K562 (cell line): ENCODE measurements at regions of chr1 and their contacts with region 1.

Region 1: DNA sequence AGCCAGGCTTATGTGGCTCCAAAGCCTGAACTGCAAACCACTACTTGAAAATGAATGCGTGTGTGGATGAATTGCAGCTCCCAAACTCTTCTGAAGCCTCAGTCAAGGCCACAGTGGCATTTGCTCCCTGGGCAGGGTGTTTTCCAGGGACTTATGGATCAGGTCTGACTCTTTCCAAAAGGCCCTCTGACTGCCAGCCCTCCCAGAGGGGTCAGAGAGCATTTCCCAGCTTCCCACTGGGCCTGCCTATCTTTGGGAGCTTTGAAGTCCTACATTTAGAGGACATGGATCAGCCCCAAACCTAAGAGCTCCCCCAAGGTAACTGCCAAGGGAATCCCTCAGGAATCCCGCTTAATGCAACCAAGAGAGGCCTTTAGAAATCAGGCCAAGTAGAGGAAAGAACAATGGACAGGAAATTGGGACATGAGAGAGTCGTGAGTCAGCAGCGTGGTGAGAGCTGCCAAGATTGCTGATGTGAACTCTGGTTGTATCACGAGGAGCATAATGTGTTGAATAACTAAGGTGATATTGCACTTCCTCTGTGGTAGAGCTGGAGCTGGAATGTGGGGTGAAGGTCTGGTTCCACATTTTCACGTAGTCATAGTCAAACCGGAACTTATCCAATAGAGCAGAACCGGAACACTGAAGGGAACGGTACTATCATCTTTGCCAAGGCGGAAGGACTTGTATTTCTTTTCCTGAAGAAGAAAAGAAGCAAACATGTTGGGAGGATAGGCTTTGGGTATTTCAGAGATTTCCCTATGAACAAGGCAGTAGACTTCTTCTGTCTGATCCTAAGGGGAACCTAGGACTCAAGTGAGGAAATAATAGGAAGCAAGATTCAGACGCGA is 99.4 kb upstream of the JUN start:
- DNase-seq: peak; percentile 41 to 89 (median 62)
- ATAC-seq: peak; percentile 63
- H3K4me3 ChIP-seq: no peak overlapping the region
- H3K27ac ChIP-seq: peak overlapping the region; percentile 97
- H3K4me1 ChIP-seq: peaks cover 47 to 64% of the 10 kb centered on the region in 2 experiments
- H3K27me3 ChIP-seq: no peaks in the 10 kb centered on the region
- CTCF ChIP-seq: no peak
- EP300 ChIP-seq: peak; percentile 86
- POLR2A ChIP-seq: 0 out of 2 replicates have a peak, but pooled peaks have one; percentile 39
- RAD21 ChIP-seq: peak in 1 of 2 experiments; percentile 17; a peak in 1 of 4 replicates

Region 2: GRCh38 chr1:58815069-58815685 is 68.1 kb before region 1 on chr1:
- CTCF ChIA-PET with region 1: no interaction called
- POLR2A ChIA-PET with region 1: no interaction called
- in situ Hi-C with region 1: no loop called
- intact Hi-C with region 1: loop called (anchors 1 kb)
- DNase-seq: peak; percentile 83 to 91 (median 86)
- ATAC-seq: peak; percentile 89
- H3K4me3 ChIP-seq: peak overlapping the region; percentile 47
- H3K27ac ChIP-seq: peak overlapping the region; percentile 93
- H3K4me1 ChIP-seq: peaks cover 21 to 27% of the 10 kb centered on the region in 2 experiments
- H3K27me3 ChIP-seq: no peaks in the 10 kb centered on the region
- CTCF ChIP-seq: no peak
- EP300 ChIP-seq: peak; percentile 72
- POLR2A ChIP-seq: no peak
- RAD21 ChIP-seq: peak in 1 of 2 experiments; percentile 11; a peak in 1 of 4 replicates

Region 3: GRCh38 chr1:58968360-58968952 is 85.2 kb after region 1 on chr1:
- CTCF ChIA-PET with region 1: no interaction called
- POLR2A ChIA-PET with region 1: interaction called, 3 read pairs
- in situ Hi-C with region 1: no loop called
- intact Hi-C with region 1: loop called (anchors 5 kb)
- DNase-seq: peak; percentile 26 to 76 (median 46)
- ATAC-seq: peak; percentile 89
- H3K4me3 ChIP-seq: no peak overlapping the region
- H3K27ac ChIP-seq: peak overlapping the region; percentile 58
- H3K4me1 ChIP-seq: peaks cover 3 to 27% of the 10 kb centered on the region in 2 experiments; a peak in 4 of 5 replicates
- H3K27me3 ChIP-seq: no peaks in the 10 kb centered on the region
- CTCF ChIP-seq: no peak
- EP300 ChIP-seq: peak; percentile 63
- POLR2A ChIP-seq: no peak
- RAD21 ChIP-seq: peak in 1 of 2 experiments; percentile 17; a peak in 2 of 4 replicates